ENCODE measurements at regions of chr18 and their contacts with region 1.

Region 1: GRCh38 chr18:55343396-55344073 is 244.5 kb downstream of the TCF4 start:
- DNase-seq: no peak
- H3K4me3 ChIP-seq: peak overlapping the region in 22 of 59 donors; percentile 0 to 62 (median 14)
- H3K27ac ChIP-seq: peak overlapping the region; percentile 27 to 100 (median 95)
- H3K27me3 ChIP-seq: no peaks in the 10 kb centered on the region
- CTCF ChIP-seq: peak; percentile 53 to 84 (median 74)

Region 2: GRCh38 chr18:55251254-55251971 is 92.1 kb before region 1 on chr18:
- intact Hi-C with region 1: no loop called
- DNase-seq: no peak
- H3K4me3 ChIP-seq: peak overlapping the region in 7 of 59 donors; percentile 1 to 20 (median 10)
- H3K27ac ChIP-seq: peak overlapping the region in 45 of 59 donors; percentile 0 to 77 (median 45)
- H3K27me3 ChIP-seq: no peaks in the 10 kb centered on the region
- CTCF ChIP-seq: no peak

Region 3: GRCh38 chr18:55280503-55280902 is 63.0 kb before region 1 on chr18:
- intact Hi-C with region 1: no loop called
- DNase-seq: no peak
- H3K4me3 ChIP-seq: no peak overlapping the region
- H3K27ac ChIP-seq: peak overlapping the region in 37 of 59 donors; percentile 4 to 64 (median 35)
- H3K27me3 ChIP-seq: no peaks in the 10 kb centered on the region
- CTCF ChIP-seq: no peak

Region 4: DNA sequence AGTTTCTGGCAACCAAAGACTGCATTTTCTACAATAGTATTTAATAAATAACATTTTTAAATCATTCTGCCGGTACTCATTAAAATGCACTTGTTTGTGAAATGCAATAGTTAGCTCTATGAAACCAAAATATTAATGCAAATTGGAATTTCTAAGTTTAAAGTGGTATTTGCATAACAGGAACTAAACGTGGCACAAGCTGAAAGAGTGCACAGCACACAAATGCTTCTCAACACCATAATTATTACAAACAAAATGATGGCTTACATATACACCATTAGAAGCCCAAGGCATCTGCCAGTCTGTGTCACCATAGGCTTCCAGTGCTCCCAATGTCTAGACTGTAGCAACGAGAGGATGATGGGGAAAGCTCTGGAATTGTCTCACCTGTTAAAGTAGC is 36.0 kb before region 1 on chr18:
- intact Hi-C with region 1: no loop called
- DNase-seq: no peak
- H3K4me3 ChIP-seq: no peak overlapping the region
- H3K27ac ChIP-seq: peak overlapping the region in 30 of 59 donors; percentile 1 to 77 (median 27)
- H3K27me3 ChIP-seq: no peaks in the 10 kb centered on the region
- CTCF ChIP-seq: no peak

Region 5: GRCh38 chr18:55589625-55590291 is 246.2 kb after region 1 on chr18:
- intact Hi-C with region 1: loop called (anchors 5 kb)
- DNase-seq: peak; percentile 92 to 96 (median 94)
- H3K4me3 ChIP-seq: peak overlapping the region; percentile 50 to 86 (median 72)
- H3K27ac ChIP-seq: peak overlapping the region; percentile 71 to 99 (median 96)
- H3K27me3 ChIP-seq: no peaks in the 10 kb centered on the region
- CTCF ChIP-seq: peak in 50 of 56 donors; percentile 4 to 63 (median 46)

Measured in dorsolateral prefrontal cortex (tissue), 120 donors.